ENCODE measurements at regions of chr9 and their contacts with region 1.

Region 1: DNA sequence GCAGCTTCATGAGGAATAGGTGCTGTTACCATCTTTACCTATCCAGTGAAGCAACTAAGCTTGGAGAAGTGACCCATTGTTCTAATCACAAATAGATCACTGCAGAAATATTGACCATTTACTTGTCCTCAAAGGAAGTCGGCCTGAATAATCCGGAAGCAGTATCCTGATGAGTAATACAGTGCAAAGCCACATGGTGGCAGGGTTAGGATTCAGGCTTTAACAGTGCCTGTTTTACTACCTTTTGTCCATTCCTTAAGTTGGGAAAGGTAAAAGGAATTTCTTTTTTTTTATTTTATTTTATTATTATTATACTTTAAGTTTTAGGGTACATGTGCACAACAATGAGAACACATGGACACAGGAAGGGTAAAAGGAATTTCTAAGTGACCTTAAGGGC is 336.3 kb downstream of the KDM4C start:
- DNase-seq: no peak
- ATAC-seq: no peak
- H3K4me3 ChIP-seq: no peak overlapping the region
- H3K27ac ChIP-seq: no peak overlapping the region
- H3K4me1 ChIP-seq: no peaks in the 10 kb centered on the region; the same call in 1 of the 2 replicates
- H3K27me3 ChIP-seq: no peaks in the 10 kb centered on the region
- CTCF ChIP-seq: peak in 2 of 3 experiments; percentile 3 to 5; a peak in 1 of 6 replicates
- EP300 ChIP-seq: no peak
- POLR2A ChIP-seq: no peak
- RAD21 ChIP-seq: no peak

Region 2: DNA sequence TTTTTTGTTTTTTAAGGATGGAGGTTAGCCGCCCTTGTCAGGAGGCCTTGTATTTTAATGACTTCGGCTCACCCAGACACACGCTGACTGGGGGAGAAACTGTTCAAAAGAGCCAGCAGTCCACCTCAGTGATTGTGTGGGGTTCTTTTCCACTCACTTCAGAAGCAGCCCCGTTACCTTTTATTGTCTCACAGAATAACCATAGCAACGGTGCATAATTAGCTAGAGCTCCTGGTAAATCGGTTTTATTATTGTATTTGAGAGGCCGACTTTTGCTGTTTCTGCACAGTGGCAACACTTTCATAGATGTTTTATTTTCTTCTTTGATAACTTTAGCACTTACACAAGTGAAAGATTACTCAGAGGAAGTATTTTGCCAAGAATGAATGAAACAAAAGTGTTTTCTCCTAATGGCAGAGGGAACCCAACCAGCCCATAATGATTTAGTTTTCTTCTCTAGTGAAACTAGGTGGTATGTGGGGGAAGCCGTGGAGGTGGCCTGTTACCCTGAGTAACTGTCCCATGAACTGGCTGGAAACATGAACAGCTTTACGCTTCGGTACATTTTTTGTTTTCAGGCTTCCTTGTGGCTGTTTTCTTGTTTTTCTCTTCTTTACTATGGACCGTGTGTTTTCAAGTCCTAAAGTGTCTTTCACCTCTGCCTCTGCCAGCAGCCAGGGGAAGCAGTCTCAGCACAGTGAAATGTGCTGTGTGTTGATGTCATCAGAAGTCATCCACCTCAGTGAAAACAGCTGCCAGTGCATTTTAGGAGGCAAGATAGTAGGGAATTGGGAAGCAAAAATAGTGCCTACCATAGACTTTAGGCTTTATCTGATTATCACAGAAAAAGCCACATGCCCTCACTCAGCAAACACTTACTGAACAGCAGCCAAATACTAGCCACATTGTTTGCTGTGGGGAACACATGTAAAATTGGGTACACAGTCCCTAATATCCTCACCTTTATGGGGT is 78.4 kb after region 1 on chr9:
- CTCF ChIA-PET with region 1: no interaction called
- POLR2A ChIA-PET with region 1: no interaction called
- RAD21 ChIA-PET with region 1: no interaction called
- SMC1A ChIA-PET with region 1: no interaction called
- in situ Hi-C with region 1: no loop called
- intact Hi-C with region 1: loop called (anchors 5 kb)
- DNase-seq: no peak
- ATAC-seq: no peak
- H3K4me3 ChIP-seq: no peak overlapping the region
- H3K27ac ChIP-seq: no peak overlapping the region
- H3K4me1 ChIP-seq: no peaks in the 10 kb centered on the region
- H3K27me3 ChIP-seq: no peaks in the 10 kb centered on the region
- CTCF ChIP-seq: no peak
- EP300 ChIP-seq: no peak
- POLR2A ChIP-seq: no peak
- RAD21 ChIP-seq: no peak

Measured in GM12878 (cell line).